ENCODE measurements at regions of chr12 and their contacts with region 1.

Region 1: DNA sequence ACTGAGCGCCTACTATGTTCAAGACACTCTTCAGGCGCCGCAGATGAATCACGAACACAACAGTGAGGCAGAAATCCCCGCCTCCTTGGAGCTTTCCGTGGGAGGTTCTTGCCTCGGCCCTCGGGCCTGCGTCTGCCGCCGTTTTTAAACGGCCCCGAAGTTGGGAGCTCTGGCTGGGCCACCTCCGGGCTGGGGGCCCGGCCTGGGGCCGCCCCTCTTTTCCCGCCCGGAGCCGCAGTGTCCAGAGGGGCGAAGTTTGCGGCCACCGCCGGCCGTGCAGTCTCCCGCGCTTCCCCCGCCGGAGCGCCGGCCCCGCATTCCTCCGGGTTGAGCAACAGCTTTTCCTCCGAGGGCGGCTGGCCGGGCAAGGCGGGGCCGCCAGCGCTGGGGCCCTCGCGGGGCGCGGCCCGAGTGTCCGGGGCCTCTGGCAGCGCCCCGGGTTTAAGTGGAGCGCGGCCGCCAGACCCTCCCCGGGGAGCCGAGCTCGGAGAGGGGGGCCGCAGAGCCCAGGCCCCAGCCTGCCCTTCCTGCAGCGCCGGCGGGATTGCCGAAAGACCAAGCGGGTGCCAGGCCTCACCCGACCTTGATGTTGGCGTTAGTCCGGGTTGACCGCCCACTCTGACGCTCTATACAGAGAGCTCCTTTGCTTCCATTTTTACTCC is 18.7 kb upstream of the CTDSP2 start:
- DNase-seq: peak; percentile 75 to 81 (median 78)
- ATAC-seq: peak; percentile 91
- H3K4me3 ChIP-seq: peak overlapping the region; percentile 42
- H3K27ac ChIP-seq: peak overlapping the region; percentile 55; the same call in 1 of the 3 replicates
- H3K4me1 ChIP-seq: peaks cover 6 to 20% of the 10 kb centered on the region in 2 experiments; a peak in 4 of 5 replicates
- H3K27me3 ChIP-seq: no peaks in the 10 kb centered on the region
- CTCF ChIP-seq: 0 out of 6 replicates have a peak, but pooled peaks of 1 of the 3 experiments have one; percentile 3
- EP300 ChIP-seq: no peak
- POLR2A ChIP-seq: 0 out of 2 replicates have a peak, but pooled peaks have one; percentile 43
- RAD21 ChIP-seq: 0 out of 4 replicates have a peak, but pooled peaks of 1 of the 2 experiments have one; percentile 5

Region 2: DNA sequence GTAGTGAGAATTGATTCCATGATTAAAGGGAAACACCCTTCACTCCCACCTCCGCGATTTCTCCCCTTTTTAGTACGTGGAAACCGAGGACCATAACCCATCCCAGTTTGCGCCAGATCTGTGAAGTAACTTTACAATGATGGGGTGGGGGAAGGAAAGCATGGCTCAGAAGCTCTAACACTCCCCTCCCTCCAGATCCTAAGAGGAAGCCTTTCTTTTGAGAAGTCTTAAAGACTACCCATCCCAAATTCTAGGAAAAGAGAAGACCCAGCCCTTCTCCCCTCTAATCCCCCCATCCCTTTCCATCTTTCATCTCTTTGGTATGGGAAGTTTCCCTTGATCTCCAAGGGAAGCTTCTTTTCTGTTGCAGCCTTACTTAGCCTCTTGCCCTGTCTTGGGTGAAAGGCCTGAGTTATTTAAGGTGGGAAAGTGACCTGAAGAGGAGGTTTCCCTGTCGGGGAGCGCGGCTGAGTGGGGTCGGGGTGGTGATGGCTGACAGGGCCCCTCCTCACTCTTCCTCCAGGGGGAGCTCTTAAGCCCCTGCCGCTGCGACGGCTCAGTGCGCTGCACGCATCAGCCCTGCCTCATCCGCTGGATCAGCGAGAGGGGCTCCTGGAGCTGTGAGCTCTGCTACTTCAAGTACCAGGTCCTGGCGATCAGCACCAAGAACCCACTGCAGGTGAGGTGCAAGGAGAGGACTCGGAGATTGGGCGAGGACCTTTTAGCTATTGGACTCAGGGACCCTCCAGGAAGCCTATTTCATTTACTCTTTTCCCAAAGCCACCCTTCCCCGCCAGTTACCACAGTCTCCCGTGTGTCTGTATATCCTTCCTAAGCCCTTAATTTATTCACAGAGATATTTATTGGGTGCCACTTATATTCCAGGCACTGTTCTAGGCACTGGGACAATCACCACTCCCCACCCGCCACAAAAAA is 108.5 kb before region 1 on chr12:
- CTCF ChIA-PET with region 1: no interaction called
- POLR2A ChIA-PET with region 1: no interaction called
- in situ Hi-C with region 1: no loop called
- intact Hi-C with region 1: no loop called
- DNase-seq: peak; percentile 72 to 88 (median 79)
- ATAC-seq: peak; percentile 66
- H3K4me3 ChIP-seq: peak overlapping the region; percentile 50
- H3K27ac ChIP-seq: no peak overlapping the region
- H3K4me1 ChIP-seq: peaks cover 30 to 35% of the 10 kb centered on the region in 2 experiments
- H3K27me3 ChIP-seq: no peaks in the 10 kb centered on the region
- CTCF ChIP-seq: peak; percentile 81 to 93 (median 87)
- EP300 ChIP-seq: no peak
- POLR2A ChIP-seq: no peak
- RAD21 ChIP-seq: peak; percentile 38 to 64

Region 3: DNA sequence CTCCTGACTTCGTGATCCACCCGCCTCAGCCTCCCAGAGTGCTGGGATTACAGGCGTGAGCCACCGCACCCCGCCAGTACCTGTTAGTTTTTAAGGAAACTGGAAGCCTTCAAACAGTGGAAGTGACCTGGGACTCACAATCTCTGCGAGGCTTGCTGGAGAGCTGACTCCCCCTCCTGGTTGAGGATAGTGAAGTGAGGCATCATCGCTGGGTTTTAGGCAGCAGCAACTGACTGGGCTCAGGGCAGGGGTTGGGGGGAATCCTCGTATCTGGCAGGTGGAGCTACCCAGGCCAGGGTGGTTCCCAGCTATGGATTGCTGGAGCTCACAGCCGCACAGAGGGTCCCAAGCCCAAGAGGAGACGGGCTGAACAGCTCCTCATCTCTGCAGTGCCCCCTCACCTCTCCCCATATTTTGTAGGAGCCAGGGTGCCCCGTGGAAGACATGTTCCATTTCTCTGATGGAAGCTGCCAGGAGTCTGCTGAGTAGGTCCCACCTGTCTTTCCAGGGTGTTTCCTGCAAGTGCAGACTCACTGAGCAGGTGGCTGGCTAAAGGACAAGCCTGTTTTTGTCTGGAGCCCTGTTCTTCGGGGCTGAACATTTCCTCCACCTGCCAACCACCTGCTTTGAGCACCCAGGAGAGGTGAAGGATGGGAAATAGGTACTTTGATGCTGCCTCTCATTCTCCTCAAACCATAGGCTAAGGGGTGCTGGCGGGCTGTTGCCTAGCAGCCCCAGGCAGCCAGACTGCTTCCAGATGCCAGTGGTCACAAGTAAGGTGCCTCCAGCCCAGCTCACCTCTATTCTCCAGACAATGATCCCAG is 49.8 kb before region 1 on chr12:
- CTCF ChIA-PET with region 1: no interaction called
- POLR2A ChIA-PET with region 1: no interaction called
- in situ Hi-C with region 1: no loop called
- intact Hi-C with region 1: no loop called
- DNase-seq: peak in 2 of 4 experiments; percentile 27 to 47
- ATAC-seq: peak; percentile 61
- H3K4me3 ChIP-seq: no peak overlapping the region
- H3K27ac ChIP-seq: no peak overlapping the region
- H3K4me1 ChIP-seq: peaks cover 10 to 25% of the 10 kb centered on the region in 2 experiments; a peak in 3 of 5 replicates
- H3K27me3 ChIP-seq: no peaks in the 10 kb centered on the region
- CTCF ChIP-seq: peak; percentile 41 to 61 (median 56); a peak in 4 of 6 replicates
- EP300 ChIP-seq: no peak
- POLR2A ChIP-seq: no peak
- RAD21 ChIP-seq: peak in 1 of 2 experiments; percentile 45; a peak in 2 of 4 replicates

Region 4: DNA sequence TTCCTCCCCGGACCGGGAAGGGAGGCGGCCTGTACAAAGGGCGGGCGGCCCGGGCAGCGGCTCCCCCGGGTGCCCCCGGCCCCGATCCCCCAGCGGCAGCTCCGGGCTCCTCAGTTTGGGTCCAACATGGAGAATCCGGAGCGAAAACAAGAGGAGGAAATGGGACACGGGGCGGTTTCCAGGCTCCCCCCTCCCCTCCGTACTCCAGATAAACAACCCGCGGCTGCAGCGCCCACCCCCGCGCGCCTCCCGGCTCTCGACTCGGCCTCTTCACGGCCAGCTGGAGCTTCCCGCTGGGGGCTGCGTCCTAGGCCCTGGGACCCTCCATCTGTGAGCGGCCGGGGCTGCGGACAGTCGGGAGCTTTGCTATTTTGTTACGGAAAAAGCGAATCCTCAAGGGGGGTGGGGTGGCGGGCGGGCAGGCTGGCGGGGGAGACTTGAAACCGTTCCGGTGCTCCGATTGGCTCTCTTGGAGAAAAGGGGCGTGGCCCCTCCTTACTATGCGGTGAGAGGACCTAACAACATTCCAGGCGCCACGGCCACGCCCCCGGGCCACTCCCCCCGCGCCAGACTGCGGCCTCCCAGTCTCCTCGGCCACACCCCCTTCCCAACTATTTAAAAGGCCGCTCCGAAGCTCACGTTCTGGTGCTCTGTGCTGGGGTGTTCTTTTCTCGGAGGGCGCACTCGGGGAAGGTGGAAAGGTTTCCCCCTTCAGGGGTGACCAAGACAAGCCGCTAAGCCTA is 18.5 kb before region 1 on chr12 and contains the start of gene CTDSP2:
- CTCF ChIA-PET with region 1: no interaction called
- POLR2A ChIA-PET with region 1: interaction called, 10 read pairs
- in situ Hi-C with region 1: no loop called
- intact Hi-C with region 1: loop called (anchors 2 kb)
- DNase-seq: peak; percentile 99 to 100 (median 100)
- ATAC-seq: peak; percentile 78
- H3K4me3 ChIP-seq: peak within 1 kb of the TSS; percentile 98
- H3K27ac ChIP-seq: peak within 1 kb of the TSS; percentile 97
- H3K4me1 ChIP-seq: peaks cover 38 to 41% of the 10 kb centered on the region in 2 experiments
- H3K27me3 ChIP-seq: no peaks in the 10 kb centered on the region
- CTCF ChIP-seq: 0 out of 6 replicates have a peak, but pooled peaks of 1 of the 3 experiments have one; percentile 1
- EP300 ChIP-seq: peak; percentile 32; the same call in 1 of the 2 replicates
- POLR2A ChIP-seq: peak; percentile 59
- RAD21 ChIP-seq: no peak
- polyA plus RNA-seq, gene CTDSP2: 20.4 to 24.1 TPM

Region 5: GRCh38 chr12:57852620-57853500 is 12.4 kb before region 1 on chr12:
- CTCF ChIA-PET with region 1: no interaction called
- POLR2A ChIA-PET with region 1: interaction called, 10 read pairs
- in situ Hi-C with region 1: no loop called
- intact Hi-C with region 1: no loop called
- DNase-seq: peak in 1 of 4 experiments; percentile 38
- ATAC-seq: peak; percentile 22; the same call in 1 of the 3 replicates
- H3K4me3 ChIP-seq: no peak overlapping the region
- H3K27ac ChIP-seq: no peak overlapping the region
- H3K4me1 ChIP-seq: peaks cover 5 to 10% of the 10 kb centered on the region in 2 experiments; a peak in 4 of 5 replicates
- H3K27me3 ChIP-seq: 0 out of 5 replicates have a peak, but pooled peaks cover 0 to 6% of the 10 kb centered on the region in 2 experiments
- CTCF ChIP-seq: 0 out of 6 replicates have a peak, but pooled peaks of 1 of the 3 experiments have one; percentile 6
- EP300 ChIP-seq: no peak
- POLR2A ChIP-seq: no peak
- RAD21 ChIP-seq: no peak

Region 6: GRCh38 chr12:57888409-57889157 is 23.4 kb after region 1 on chr12:
- CTCF ChIA-PET with region 1: no interaction called
- POLR2A ChIA-PET with region 1: interaction called, 14 read pairs
- in situ Hi-C with region 1: no loop called
- intact Hi-C with region 1: no loop called
- DNase-seq: no peak
- ATAC-seq: peak; percentile 47
- H3K4me3 ChIP-seq: no peak overlapping the region
- H3K27ac ChIP-seq: no peak overlapping the region
- H3K4me1 ChIP-seq: peaks cover 25 to 27% of the 10 kb centered on the region in 2 experiments
- H3K27me3 ChIP-seq: no peaks in the 10 kb centered on the region
- CTCF ChIP-seq: no peak
- EP300 ChIP-seq: no peak
- POLR2A ChIP-seq: no peak
- RAD21 ChIP-seq: no peak